Left lung (tissue), 14 donors: ENCODE measurements at regions of chr11 and their contacts with region 1.

Region 1: GRCh38 chr11:9137293-9138132 is 46.1 kb upstream of the SCUBE2 start:
- DNase-seq: peak; percentile 72 to 88 (median 79)
- ATAC-seq: peak; percentile 96
- H3K4me3 ChIP-seq: no peak overlapping the region
- H3K27ac ChIP-seq: peak overlapping the region; percentile 29 to 33
- H3K4me1 ChIP-seq: peaks cover 9 to 28% of the 10 kb centered on the region in 2 donors
- H3K27me3 ChIP-seq: no peaks in the 10 kb centered on the region
- CTCF ChIP-seq: peak; percentile 89 to 97

Region 2: GRCh38 chr11:9015677-9016076 is 121.8 kb before region 1 on chr11:
- intact Hi-C with region 1: loop called in 1 of 2 experiments (anchors 10 kb)
- DNase-seq: peak in 3 of 4 donors; percentile 56 to 77 (median 61)
- ATAC-seq: peak; percentile 92
- H3K4me3 ChIP-seq: no peak overlapping the region
- H3K27ac ChIP-seq: no peak overlapping the region
- H3K4me1 ChIP-seq: peaks cover under 1 to 29% of the 10 kb centered on the region in 2 donors
- H3K27me3 ChIP-seq: no peaks in the 10 kb centered on the region
- CTCF ChIP-seq: peak; percentile 64 to 86

Region 3: GRCh38 chr11:9187616-9188015 is 50.1 kb after region 1 on chr11:
- intact Hi-C with region 1: no loop called
- DNase-seq: no peak
- ATAC-seq: no peak
- H3K4me3 ChIP-seq: no peak overlapping the region
- H3K27ac ChIP-seq: no peak overlapping the region
- H3K4me1 ChIP-seq: no peaks in the 10 kb centered on the region
- H3K27me3 ChIP-seq: no peaks in the 10 kb centered on the region
- CTCF ChIP-seq: no peak

Region 4: GRCh38 chr11:9347100-9347499 is 209.6 kb after region 1 on chr11:
- intact Hi-C with region 1: no loop called
- DNase-seq: peak in 1 of 4 donors; percentile 10
- ATAC-seq: peak; percentile 81
- H3K4me3 ChIP-seq: no peak overlapping the region
- H3K27ac ChIP-seq: no peak overlapping the region
- H3K4me1 ChIP-seq: no peaks in the 10 kb centered on the region
- H3K27me3 ChIP-seq: no peaks in the 10 kb centered on the region
- CTCF ChIP-seq: no peak